ENCODE measurements at regions of chr12 and their contacts with region 1.

Region 1: GRCh38 chr12:108214486-108214885 is 85.4 kb downstream of the WSCD2 start:
- DNase-seq: peak; percentile 53
- ATAC-seq: no peak
- H3K4me3 Mint-ChIP-seq: no peak overlapping the region
- H3K27ac Mint-ChIP-seq: no peak overlapping the region
- H3K4me1 Mint-ChIP-seq: no peaks in the 10 kb centered on the region
- H3K27me3 Mint-ChIP-seq: peaks cover 22% of the 10 kb centered on the region

Region 2: DNA sequence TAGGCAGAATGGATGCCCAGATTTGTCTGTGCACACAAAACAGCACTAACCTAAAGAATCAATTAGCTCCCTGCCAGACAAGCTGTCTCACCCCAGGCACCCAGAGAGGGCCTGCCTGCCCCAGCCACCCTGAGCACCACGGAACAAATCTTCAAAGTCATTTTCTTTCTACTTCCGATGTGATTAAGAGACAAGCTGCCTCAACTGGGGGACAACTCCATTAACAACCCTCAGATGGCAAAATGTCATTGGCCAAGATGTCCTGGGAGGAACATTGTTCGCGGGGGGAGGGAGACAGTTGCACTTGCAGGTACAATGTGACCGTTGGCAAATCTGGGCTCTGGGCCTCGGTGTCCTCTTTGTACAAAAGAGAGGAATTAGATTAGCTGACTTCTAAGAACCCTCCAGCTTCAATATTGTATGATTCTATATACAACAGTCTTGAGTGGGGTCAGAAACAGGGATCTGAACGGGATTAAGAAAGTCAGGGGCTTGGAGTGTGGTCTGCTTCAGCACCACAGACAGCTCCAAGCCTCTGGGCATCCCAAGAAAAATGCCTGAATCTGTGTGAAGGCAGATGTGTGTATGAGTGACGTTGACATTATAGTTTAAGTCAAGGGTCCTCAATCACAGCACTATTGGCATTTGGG is 167.4 kb after region 1 on chr12:
- CTCF ChIA-PET with region 1: no interaction called
- POLR2A ChIA-PET with region 1: no interaction called
- intact Hi-C with region 1: no loop called
- DNase-seq: peak; percentile 8
- ATAC-seq: no peak
- H3K4me3 Mint-ChIP-seq: no peak overlapping the region
- H3K27ac Mint-ChIP-seq: no peak overlapping the region
- H3K4me1 Mint-ChIP-seq: no peaks in the 10 kb centered on the region
- H3K27me3 Mint-ChIP-seq: peaks cover 3% of the 10 kb centered on the region

Region 3: GRCh38 chr12:108468201-108468968 is 253.9 kb after region 1 on chr12:
- CTCF ChIA-PET with region 1: no interaction called
- POLR2A ChIA-PET with region 1: no interaction called
- intact Hi-C with region 1: loop called in 1 of 2 experiments (anchors 10 kb)
- DNase-seq: peak; percentile 27
- ATAC-seq: no peak
- H3K4me3 Mint-ChIP-seq: no peak overlapping the region
- H3K27ac Mint-ChIP-seq: no peak overlapping the region
- H3K4me1 Mint-ChIP-seq: no peaks in the 10 kb centered on the region
- H3K27me3 Mint-ChIP-seq: peaks cover 17% of the 10 kb centered on the region